ENCODE measurements at regions of chr1 and their contacts with region 1.

Region 1: GRCh38 chr1:156751758-156752757 is 583 bp upstream of the HDGF start:
- DNase-seq: peak; percentile 72
- H3K4me3 ChIP-seq: peak overlapping the region; percentile 96
- CTCF ChIP-seq: peak; percentile 39

Region 2: DNA sequence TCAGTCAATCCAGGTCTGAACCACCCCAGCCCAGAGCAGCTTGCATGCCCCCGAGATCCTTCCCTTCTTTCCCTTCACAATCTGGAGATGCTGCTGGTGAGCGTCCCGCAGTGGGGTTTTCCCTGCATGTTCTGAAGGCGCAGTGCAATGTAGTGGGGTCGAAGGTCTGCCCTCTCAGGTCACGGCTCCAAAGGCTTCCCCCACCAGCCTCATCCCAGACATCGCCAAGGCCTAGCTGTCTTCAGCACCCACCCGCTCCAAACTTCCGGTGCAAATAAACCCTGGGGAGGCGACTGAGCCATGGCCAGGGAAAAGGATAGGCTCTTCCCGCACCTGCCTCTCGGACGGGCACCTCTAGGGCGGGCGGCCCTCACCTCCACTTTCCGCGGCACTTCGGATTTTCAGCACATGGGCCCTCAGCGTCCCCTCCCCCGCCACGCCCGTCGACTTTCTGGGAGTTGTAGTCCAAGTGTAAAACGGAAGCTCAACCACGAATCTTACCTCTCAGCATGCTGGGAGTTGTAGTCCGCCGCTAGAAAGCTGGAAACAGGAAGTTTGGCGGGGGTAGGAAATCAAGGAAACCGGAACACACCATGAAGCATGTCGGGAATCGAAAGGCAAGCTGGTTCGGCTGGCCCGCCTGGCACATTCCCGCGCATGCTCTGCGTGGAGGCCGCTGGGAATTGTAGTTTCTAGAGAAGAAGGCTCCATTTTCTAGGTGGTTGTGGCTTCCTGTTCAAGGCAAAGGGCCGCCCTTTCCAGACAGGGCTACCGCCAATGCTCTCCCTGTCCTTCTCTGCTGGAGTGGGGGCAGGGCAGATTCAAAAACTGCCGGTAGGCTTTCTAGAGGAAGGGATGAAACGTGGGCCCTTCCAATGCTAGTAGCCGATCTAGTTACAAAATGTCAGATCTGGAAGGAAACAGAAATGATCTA is 11.1 kb before region 1 on chr1 and contains the start of gene MRPL24:
- CTCF ChIA-PET with region 1: interaction called, 3 read pairs
- POLR2A ChIA-PET with region 1: interaction called, 12 read pairs
- DNase-seq: peak; percentile 96
- H3K4me3 ChIP-seq: peak within 1 kb of the TSS; percentile 93
- CTCF ChIP-seq: no peak

Region 3: DNA sequence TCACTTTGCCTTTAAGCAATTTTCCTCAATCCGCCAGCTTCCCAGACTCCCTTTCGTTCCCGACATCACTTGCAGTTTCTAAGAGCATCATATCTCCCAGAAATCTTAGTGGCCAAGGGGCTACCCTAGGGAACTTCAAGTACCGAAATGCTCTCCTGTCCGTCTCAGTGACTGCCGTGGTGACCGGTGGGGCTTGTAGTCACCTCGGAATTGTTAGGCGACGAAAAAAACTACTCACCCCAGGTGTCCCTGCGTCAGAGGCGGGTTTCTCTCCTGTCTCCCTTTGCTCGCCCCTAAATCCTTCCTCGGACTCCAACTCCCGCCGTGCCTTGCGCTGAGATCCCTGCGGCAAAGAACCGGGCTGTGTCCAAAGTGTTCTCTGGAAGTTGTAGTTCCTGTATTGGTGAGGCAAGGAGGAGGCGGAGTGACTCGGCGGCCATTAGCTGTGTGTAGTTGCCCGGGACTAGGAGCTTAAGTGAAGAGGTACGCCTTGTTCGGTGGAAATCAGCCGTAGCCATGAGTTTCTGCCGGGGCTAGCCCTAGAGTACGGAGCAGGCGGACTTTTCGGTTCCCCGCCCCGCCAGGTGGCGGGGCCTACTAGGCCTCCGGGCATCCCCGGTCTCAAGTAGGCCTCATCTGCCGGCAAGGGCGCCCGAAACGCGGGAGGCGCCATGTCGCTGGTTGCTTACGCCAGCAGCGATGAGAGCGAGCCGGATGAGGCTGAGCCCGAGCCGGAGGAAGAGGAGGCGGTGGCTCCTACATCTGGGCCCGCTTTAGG is 15.2 kb after region 1 on chr1 and contains the start of gene PRCC:
- CTCF ChIA-PET with region 1: interaction called, 10 read pairs
- POLR2A ChIA-PET with region 1: interaction called, 17 read pairs
- DNase-seq: peak; percentile 99
- H3K4me3 ChIP-seq: peak within 1 kb of the TSS; percentile 95
- CTCF ChIP-seq: no peak

Measured in AG04449 (cell line).